Head of caudate nucleus (tissue), 42 donors: ENCODE measurements at regions of chr13 and their contacts with region 1.

Region 1: DNA sequence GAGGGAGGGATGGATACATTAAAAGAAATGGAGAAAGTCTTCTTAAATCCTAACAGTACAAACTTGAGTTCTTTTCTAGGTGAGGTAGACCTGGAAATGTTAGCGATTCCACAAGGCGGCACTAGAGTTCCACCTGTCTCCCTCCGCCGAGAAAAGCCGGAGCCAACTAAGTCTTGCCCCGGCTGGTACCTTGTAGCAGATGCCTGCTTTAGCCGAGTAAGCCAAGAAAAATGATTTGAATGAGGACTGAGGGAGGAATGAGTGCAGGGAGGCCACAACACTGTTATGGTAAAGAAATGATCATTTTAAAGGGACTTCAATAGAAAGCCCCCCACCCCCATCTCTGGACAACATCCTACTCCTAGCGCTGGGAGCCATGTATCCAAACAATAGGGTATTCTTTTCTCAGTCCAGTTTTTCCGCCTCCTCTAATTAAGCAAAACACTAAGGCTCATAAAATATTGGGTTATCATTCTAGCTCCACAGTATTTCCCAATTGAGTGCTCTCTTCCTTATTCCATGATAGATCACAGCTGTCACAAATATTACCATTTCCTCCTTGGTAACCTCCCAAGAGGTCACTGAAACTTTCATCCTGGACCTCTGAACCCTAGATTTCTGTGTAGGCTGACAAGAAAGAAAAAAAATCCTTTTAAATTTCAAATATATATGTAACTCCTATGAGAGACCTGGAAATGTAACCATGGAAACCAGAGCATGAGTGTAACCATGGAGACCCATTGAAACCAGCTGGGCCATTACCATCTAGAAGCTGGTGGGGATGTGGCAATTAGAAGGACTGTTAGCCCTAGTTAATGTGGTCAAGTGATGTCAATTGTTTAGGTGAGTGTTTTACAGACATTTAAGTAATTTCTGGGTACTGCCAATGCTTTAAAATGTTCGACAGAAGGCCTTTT is 58.3 kb downstream of the GPALPP1 start:
- DNase-seq: peak; percentile 75 to 95 (median 88)

Region 2: GRCh38 chr13:45280751-45281634 is 233.3 kb after region 1 on chr13:
- intact Hi-C with region 1: loop called (anchors 5 kb)
- DNase-seq: peak; percentile 82 to 96 (median 90)

Region 3: DNA sequence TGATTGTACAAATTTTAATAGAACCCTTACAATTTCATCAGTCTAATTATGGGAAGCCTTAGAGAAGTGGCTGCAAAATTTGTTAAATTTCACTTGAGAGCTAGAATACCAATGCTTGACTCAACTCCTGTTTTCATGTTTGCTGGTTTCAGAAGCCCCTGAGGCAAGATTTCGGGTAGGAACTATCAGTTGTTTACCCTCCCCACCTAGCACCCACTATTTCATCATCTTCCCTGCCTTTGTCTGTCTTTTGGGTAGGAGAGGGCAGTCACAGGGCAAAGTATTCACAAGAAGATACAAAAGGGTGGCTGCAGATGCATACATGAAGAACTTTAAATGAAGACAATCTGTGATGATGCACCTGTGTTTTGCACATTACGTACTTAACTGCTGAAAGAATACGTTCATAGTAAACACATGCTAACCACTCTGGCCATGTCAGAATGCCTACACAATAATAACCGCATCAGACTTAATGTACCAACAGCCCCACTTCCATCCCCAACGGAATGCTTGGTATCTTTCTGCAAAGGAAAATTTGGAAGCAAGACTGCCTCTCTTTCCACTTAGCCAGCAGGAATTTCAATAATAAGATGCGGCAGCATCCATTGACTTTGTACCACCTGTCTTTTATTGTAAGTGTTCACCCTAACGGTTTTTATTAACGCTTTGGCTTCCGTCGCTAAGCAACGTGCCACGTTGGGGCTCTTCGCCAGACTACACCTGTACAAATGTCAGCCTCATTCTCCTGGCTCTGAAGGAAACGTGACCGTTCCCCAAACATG is 262.9 kb after region 1 on chr13:
- intact Hi-C with region 1: loop called (anchors 2 kb)
- DNase-seq: no peak

Region 4: DNA sequence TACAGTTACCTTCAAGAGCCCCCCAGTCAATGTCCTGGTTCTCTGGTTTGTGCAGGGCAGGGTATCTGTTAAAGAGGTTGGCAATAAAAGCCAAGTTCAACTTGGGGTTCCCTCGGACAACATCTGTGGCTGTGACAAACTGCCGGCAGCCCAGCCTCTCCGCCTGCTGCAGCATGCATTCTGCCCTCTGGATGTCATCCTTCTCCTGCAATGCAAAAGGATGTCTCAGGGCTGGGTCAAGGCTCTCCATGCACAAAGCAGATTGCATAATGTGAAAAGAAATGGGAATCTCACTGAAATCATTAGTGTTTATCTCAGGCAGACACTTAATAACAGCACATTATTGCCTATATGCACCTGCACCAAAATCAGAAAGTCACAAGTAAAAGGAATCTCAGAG is 1099.2 kb after region 1 on chr13:
- intact Hi-C with region 1: no loop called
- DNase-seq: peak in 36 of 42 donors; percentile 14 to 70 (median 38)